Cardiac septum (tissue), 1 donor: ENCODE measurements at regions of chr4 and their contacts with region 1.

Region 1: DNA sequence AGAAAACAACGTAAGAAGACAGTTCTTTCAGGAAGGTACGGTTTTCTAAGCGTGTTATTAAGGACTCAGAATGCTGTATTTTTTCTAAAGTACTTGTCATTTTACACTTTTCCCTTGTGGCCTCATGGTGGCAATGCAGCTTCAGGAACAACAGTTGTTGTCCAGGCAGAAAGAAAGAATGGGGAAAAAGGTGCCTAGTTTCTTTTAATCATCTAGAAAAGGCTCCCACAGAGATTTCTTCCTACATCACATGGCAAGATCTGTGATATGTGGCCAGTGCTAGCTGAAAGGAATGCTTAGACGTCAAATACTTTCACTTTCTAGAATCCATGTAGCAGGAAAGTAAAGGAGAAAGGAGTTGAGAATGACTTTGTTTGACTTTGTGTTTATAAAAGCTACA is 49.0 kb upstream of the TRAM1L1 start:
- DNase-seq: no peak

Region 2: DNA sequence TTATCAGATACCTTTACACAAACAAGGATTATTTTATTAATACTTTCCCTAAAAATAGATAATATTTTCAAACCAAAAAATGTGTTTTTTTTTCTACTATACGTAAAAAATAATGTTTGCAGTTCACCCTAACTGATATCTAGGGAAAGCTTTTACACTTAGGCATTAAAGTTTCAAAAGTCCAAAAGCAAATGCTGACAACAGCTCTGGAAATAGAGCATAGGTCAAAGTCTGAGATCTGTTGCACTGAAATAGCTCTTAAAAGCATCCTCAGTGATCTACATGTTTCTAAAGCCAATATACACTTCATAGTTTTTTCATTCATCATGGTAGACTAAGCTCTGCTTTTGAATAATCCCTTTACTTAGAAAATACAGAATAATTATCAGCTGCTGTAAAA is 271.8 kb before region 1 on chr4:
- intact Hi-C with region 1: no loop called
- DNase-seq: no peak

Region 3: GRCh38 chr4:116982656-116983055 is 151.7 kb before region 1 on chr4:
- intact Hi-C with region 1: no loop called
- DNase-seq: no peak

Region 4: GRCh38 chr4:118224239-118224829 is 1089.9 kb after region 1 on chr4:
- intact Hi-C with region 1: loop called (anchors 10 kb)
- DNase-seq: no peak